Esophagus muscularis mucosa (tissue), 4 donors: ENCODE measurements at regions of chr1 and their contacts with region 1.

Region 1: GRCh38 chr1:25997828-25998761 is at the start of gene PAFAH2:
- DNase-seq: peak; percentile 99
- H3K4me3 ChIP-seq: peak within 1 kb of the TSS; percentile 66 to 73 (median 71)
- H3K27ac ChIP-seq: peak within 1 kb of the TSS; percentile 75 to 90 (median 86)
- H3K4me1 ChIP-seq: peaks cover 15 to 29% (median 20%) of the 10 kb centered on the region in 4 donors
- H3K27me3 ChIP-seq: no peaks in the 10 kb centered on the region
- CTCF ChIP-seq: peak; percentile 95 to 99 (median 98)
- EP300 ChIP-seq: no peak
- POLR2A ChIP-seq: no peak
- total RNA-seq, gene PAFAH2: 6.1 to 10.0 (median 9.2) TPM

Region 2: GRCh38 chr1:25819576-25820246 is 178.4 kb before region 1 on chr1 and contains the start of gene MTFR1L:
- intact Hi-C with region 1: loop called (anchors 5 kb)
- DNase-seq: peak; percentile 95
- H3K4me3 ChIP-seq: peak within 1 kb of the TSS; percentile 80 to 91 (median 89)
- H3K27ac ChIP-seq: peak within 1 kb of the TSS; percentile 89 to 96 (median 92)
- H3K4me1 ChIP-seq: peaks cover 28 to 60% (median 44%) of the 10 kb centered on the region in 4 donors
- H3K27me3 ChIP-seq: no peaks in the 10 kb centered on the region
- CTCF ChIP-seq: peak in 1 of 3 experiments; percentile 14
- EP300 ChIP-seq: no peak
- POLR2A ChIP-seq: peak; percentile 65
- total RNA-seq, gene MTFR1L: 91.1 to 107 (median 101) TPM

Region 3: GRCh38 chr1:25895365-25895993 is 102.6 kb before region 1 on chr1:
- intact Hi-C with region 1: loop called (anchors 2 kb)
- DNase-seq: peak; percentile 95
- H3K4me3 ChIP-seq: peak overlapping the region in 2 of 4 donors; percentile 9 to 17
- H3K27ac ChIP-seq: peak overlapping the region in 2 of 4 donors; percentile 22 to 60
- H3K4me1 ChIP-seq: peaks cover 10 to 38% (median 37%) of the 10 kb centered on the region in 4 donors
- H3K27me3 ChIP-seq: no peaks in the 10 kb centered on the region
- CTCF ChIP-seq: peak; percentile 98 to 99 (median 99)
- EP300 ChIP-seq: no peak
- POLR2A ChIP-seq: no peak

Region 4: DNA sequence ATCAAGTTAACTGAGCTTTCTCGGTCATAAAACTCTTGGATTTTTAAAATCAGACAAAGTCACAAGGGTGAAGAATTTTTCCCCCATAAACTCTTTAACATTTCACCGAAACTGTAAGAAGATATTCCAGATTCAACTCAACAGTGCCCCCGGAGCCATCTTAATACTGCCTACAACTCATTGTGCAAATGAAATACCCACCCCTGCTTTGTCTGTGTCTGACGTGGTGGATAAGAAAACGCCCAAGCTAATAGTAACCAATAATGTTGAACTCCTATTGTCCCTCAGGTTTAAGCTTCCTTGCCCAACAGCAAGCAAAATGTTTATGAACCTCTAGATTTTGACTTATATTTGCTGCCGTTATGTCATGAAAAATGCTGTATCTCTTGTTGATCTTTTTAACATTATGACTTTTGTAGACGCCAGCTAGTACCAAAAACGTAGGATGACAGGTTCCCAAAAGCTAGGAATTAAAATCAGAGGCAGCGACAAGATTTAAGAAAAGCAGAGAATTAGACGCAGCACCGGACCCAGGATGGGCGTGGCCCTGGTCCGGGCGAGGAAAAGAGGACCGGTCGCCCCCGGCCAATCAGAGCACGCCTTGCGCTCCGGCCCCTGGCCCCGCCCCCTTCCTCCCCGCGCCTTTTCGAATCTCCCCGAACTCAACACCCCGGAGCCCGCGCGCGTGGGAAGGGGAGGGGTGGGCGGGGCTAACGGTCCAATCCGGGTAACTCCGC is 93.0 kb before region 1 on chr1:
- intact Hi-C with region 1: loop called (anchors 2 kb)
- DNase-seq: peak; percentile 99
- H3K4me3 ChIP-seq: peak overlapping the region; percentile 73 to 89 (median 79)
- H3K27ac ChIP-seq: peak overlapping the region; percentile 50 to 85 (median 75)
- H3K4me1 ChIP-seq: peaks cover 17 to 33% (median 30%) of the 10 kb centered on the region in 4 donors
- H3K27me3 ChIP-seq: no peaks in the 10 kb centered on the region
- CTCF ChIP-seq: no peak
- EP300 ChIP-seq: no peak
- POLR2A ChIP-seq: no peak

Region 5: DNA sequence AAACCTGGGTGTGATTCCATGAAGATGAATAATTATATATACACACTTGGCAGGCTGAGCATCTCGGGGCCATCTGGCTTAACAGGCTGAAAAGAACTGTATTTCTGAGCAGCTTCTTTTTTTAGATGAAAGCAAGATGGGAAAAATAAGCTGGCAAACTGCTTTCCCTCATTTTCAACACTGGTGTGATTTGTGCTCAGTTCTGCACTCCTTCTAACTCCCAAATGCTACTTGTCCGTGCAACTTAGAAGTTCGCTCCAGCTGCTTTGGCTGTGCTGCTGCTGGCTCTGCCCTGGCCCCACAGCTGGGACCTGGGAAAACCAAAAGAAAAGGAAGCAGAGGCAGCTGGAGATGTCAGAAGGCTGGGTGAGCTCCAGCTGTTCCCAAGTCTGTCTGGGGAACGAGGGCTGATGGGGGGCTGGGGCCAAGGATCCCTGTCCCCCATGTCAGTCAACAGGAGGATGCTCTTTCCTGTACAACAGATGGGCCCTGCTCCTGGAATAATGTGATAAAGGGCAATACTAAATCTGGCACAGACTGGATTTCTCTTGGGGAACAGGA is 45.2 kb before region 1 on chr1:
- intact Hi-C with region 1: no loop called
- DNase-seq: no peak
- H3K4me3 ChIP-seq: no peak overlapping the region
- H3K27ac ChIP-seq: no peak overlapping the region
- H3K4me1 ChIP-seq: peaks cover 0 to 18% (median 13%) of the 10 kb centered on the region in 4 donors
- H3K27me3 ChIP-seq: no peaks in the 10 kb centered on the region
- CTCF ChIP-seq: no peak
- EP300 ChIP-seq: no peak
- POLR2A ChIP-seq: no peak